Esophagus squamous epithelium (tissue), 5 donors: ENCODE measurements at regions of chr3 and their contacts with region 1.

Region 1: DNA sequence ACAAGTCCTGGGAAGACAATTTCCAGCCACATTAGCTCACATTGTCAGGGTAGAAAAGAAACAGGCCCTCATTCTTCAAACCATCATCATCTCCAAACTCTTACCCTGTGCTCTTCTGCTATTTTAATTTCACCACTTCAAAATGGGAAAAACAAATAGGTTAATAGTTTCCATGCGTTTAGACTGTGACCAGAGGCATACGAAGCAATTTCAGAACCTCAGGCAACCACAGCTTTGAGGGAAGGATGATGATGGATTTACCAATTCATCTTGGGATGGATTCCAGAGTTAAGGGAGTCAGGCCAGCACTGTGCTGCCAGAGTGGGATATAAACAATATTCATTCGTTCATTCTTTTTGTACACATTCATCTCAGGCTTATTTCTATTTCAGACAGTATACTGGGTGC is 307.8 kb upstream of the TPRG1 start:
- DNase-seq: no peak
- H3K4me3 ChIP-seq: no peak overlapping the region
- H3K27ac ChIP-seq: no peak overlapping the region
- H3K4me1 ChIP-seq: peaks cover 4 to 29% (median 10%) of the 10 kb centered on the region in 3 donors
- H3K27me3 ChIP-seq: no peaks in the 10 kb centered on the region
- CTCF ChIP-seq: no peak
- POLR2A ChIP-seq: no peak

Region 2: DNA sequence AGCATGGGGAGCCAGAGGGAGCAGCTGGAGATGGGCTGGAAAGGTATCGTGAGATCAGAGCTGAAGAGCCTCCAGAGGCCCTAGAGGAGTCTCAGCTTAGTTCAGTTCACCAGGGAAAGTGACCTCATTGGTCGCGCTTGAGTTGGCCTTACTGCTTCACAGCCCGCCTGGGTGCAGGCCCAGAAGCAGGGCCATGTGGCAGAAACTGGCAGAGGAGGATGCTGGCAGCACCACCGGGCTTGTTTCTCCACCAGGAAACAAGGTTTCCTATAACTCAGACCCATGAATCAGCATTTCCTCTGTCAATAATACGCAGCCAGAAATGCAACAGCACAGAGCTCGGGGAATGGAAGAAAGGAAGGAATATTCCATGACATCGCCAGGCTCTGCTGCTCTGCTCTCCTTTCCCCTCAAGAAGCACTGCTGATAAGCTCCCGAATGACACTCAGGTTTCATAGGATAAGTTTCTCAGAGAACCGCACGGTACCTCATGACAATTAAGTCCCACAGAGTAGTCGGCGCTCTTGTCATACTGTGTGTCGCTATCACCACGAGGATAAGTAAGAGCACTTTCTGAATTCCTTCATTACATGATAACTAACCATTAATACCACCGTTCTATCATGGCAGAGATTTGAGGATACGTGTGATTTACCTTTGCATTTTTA is 857.1 kb before region 1 on chr3:
- intact Hi-C with region 1: no loop called
- DNase-seq: no peak
- H3K4me3 ChIP-seq: no peak overlapping the region
- H3K27ac ChIP-seq: no peak overlapping the region
- H3K4me1 ChIP-seq: peaks cover 0 to 18% (median 0%) of the 10 kb centered on the region in 3 donors
- H3K27me3 ChIP-seq: no peaks in the 10 kb centered on the region
- CTCF ChIP-seq: no peak
- POLR2A ChIP-seq: no peak

Region 3: DNA sequence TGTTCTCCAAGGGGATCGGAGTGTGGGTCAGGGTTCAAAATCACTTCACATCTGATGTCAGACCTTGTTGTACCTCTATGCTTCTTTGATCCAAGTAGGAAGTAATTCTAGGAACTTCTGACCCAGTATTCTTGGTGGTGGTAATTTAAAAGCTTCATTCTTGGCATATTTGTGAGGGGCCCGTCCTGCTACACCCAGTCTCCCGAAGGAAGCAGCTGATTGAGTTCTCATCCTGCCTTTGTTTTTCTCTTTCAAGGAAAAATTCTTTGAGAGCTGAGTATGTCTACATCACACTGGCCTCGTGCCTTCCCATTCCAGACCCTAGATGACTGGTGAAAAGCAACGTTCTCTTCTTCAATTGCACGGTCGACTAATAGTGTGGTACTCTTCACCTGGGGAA is 73.4 kb after region 1 on chr3:
- intact Hi-C with region 1: loop called (anchors 10 kb)
- DNase-seq: no peak
- H3K4me3 ChIP-seq: no peak overlapping the region
- H3K27ac ChIP-seq: no peak overlapping the region
- H3K4me1 ChIP-seq: peaks cover 0 to 31% (median 3%) of the 10 kb centered on the region in 3 donors
- H3K27me3 ChIP-seq: no peaks in the 10 kb centered on the region
- CTCF ChIP-seq: no peak
- POLR2A ChIP-seq: no peak